AG04449 (cell line): ENCODE measurements at regions of chr11 and their contacts with region 1.

Region 1: GRCh38 chr11:130223291-130223971 is 63.8 kb downstream of the ST14 start:
- DNase-seq: no peak
- H3K4me3 ChIP-seq: no peak overlapping the region
- CTCF ChIP-seq: no peak

Region 2: DNA sequence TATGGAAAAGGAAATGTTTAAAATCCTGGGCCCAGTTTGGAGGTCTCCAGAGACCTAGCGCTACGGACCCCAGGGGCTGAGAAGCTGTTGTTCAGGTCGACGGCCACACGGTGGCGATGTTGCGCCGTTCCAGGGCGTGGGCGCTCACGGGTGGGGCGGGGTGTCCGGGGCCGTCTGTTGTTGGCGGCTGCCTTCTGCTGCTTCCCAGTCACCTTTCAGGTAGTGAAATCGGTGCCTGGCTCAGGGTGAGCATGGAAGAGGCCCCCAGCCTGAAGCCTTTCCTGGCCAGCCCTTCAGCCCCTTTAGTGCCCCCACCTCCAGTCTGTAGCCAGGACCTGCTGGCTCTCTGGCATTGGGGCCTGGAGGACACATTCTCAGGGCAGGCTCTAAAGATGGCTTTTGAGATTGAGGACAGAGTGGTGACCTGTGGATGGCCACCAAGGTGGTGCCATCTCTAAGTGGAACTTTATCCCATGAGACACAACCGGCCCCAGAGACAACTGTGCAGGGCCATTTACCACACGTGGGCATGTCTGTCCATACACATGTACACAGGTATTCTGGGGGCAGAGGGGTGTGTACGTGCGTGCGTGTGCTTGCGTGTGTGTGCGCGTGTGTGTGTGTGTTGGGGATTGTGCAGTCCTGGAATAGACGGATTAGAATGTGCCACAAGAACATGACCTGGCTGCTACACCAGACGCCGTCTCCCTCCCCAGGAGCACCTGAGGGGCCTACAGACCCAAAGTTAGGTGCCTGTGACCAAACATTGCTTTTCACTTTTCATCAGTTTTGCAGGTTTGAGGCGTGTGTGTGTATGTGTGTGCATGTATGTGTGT is 10.1 kb before region 1 on chr11:
- CTCF ChIA-PET with region 1: interaction called, 19 read pairs
- POLR2A ChIA-PET with region 1: no interaction called
- DNase-seq: no peak
- H3K4me3 ChIP-seq: no peak overlapping the region
- CTCF ChIP-seq: peak; percentile 93